ENCODE measurements at regions of chr19 and their contacts with region 1.

Region 1: DNA sequence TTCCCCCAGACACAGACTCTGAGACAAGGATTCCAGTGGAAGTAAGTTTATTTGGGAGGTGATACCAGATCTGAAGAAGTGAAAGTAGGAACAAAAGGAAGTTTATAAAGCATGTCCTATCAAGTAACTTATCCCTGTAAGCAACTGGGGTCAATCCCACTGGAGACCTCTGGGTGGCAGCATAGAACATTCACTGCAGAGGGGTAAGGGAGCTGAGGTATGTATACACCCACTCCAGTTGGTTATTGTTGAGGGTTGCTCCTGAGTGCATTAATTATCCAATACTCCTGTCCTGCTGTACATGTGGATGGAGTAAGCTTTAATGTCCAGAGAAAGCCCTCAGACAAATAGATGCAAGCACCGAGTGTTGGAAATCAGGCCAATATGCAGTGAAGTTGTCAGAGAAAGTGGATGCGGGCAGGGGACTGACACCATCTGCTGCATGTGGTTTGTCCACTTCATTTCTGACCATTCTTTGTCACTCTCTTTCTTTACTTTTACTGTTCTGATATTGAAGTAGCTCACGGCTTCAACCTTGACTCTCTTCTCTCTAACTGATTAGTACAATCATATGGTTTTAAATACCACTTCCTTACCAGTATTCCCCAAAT is 46.7 kb downstream of the NOTCH3 start:
- DNase-seq: peak; percentile 48
- ATAC-seq: no peak
- H3K4me3 Mint-ChIP-seq: no peak overlapping the region
- H3K27ac Mint-ChIP-seq: no peak overlapping the region
- H3K4me1 Mint-ChIP-seq: no peaks in the 10 kb centered on the region
- H3K27me3 Mint-ChIP-seq: peaks cover 7% of the 10 kb centered on the region

Region 2: DNA sequence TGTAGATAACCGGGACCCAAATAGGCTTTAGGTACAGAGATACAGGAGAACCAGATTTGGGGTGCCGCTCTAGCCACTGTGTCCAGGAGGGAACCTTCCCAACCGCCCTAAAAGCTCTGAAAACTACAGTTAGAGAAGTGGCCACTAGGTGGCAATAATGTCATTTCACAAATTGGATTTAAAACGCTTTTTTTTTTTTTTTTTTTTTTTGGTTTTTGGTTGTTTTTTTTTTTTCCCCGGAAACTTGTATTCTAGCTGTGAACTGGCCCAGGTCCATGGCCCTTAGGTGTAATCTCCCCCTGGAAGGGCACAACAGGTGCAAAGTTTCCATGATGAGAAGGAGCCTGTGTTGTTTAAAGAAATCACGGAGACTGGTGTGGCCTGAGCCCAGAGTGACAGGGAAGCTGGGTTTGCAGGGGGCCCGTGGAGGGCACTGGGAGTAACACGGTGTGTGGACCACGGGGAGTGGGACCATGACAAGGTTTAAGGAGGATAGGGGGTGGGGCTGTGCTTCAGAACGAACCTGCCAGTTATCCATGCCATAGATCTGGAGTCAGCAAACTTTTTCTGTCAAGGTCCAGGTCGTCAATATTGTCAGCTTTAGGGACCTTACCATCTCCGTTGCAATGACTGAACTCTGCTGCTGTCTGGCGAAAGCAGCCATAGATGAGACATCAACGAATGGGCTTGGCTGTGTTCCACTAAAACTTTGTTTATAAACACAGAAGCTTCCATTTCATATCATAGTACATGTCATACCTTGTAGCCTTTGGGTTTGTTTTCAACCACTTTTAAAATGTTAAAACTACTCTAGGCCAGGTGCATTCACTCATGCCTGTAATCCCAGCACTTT is 62.0 kb before region 1 on chr19:
- CTCF ChIA-PET with region 1: interaction called, 20 read pairs
- POLR2A ChIA-PET with region 1: no interaction called
- DNase-seq: peak; percentile 70
- ATAC-seq: peak; percentile 63
- H3K4me3 Mint-ChIP-seq: no peak overlapping the region
- H3K27ac Mint-ChIP-seq: no peak overlapping the region
- H3K4me1 Mint-ChIP-seq: peaks cover 5% of the 10 kb centered on the region
- H3K27me3 Mint-ChIP-seq: peaks cover under 1% of the 10 kb centered on the region

Region 3: GRCh38 chr19:15365264-15365663 is 211.2 kb after region 1 on chr19:
- CTCF ChIA-PET with region 1: no interaction called
- POLR2A ChIA-PET with region 1: no interaction called
- DNase-seq: no peak
- ATAC-seq: peak; percentile 34
- H3K4me3 Mint-ChIP-seq: no peak overlapping the region
- H3K27ac Mint-ChIP-seq: no peak overlapping the region
- H3K4me1 Mint-ChIP-seq: peaks cover 5% of the 10 kb centered on the region
- H3K27me3 Mint-ChIP-seq: no peaks in the 10 kb centered on the region

Measured in activated CD8-positive, alpha-beta T cell treated with anti-CD3 and anti-CD28 coated beads, Interleukin-2, amount 10 ng/mL, durations not matched to agents 7 days and 5 days (primary cell).